ENCODE measurements at regions of chr14 and their contacts with region 1.

Region 1: GRCh38 chr14:24299255-24300195 is at the starts of genes DHRS1 and NOP9:
- DNase-seq: peak; percentile 93
- ATAC-seq: peak; percentile 78
- H3K4me3 Mint-ChIP-seq: peak within 1 kb of the TSS; percentile 95
- H3K27ac Mint-ChIP-seq: peak within 1 kb of the TSS; percentile 94
- H3K4me1 Mint-ChIP-seq: peaks cover 51% of the 10 kb centered on the region
- H3K27me3 Mint-ChIP-seq: no peaks in the 10 kb centered on the region
- CTCF ChIP-seq: no peak
- total RNA-seq, gene DHRS1: 32.5 and 33.9 TPM in 2 replicates
- total RNA-seq, gene NOP9: 30.5 and 36.4 TPM in 2 replicates

Region 2: DNA sequence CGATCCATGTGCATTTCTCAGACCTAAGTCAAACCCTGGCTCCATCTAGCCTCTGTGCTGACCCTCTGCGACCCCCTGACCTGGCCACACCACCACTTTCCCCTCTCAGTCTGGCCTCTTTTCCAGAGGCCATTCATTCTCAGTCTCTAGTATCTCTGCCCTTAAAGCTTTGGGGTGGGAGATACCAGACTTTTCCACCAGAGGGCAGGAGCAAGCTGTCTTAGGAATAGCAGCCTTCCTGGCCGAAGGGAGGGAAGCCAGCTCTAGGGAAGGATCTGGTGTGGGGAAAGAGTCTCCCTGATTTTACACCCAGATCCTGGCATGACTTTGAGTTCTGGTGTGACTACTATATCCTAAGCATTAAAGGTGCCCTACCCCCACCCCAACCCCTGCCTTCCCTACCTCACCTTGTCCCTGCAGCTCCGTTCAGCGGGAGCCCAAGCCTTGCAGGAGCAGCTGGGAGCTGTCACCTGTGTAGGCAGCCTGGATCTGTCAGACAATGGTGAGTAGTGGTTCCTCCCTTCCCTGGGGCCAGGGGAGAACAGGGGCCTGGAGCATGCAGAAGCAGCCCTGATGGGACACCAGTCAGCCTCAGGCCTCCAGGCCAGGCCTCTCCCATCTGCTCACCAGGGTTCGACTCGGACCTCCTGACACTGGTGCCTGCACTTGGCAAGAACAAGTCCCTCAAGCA is 241.1 kb before region 1 on chr14:
- CTCF ChIA-PET with region 1: interaction called, 3 read pairs
- POLR2A ChIA-PET with region 1: no interaction called
- intact Hi-C with region 1: loop called (anchors 1 kb)
- DNase-seq: no peak
- ATAC-seq: peak; percentile 84
- H3K4me3 Mint-ChIP-seq: no peak overlapping the region
- H3K27ac Mint-ChIP-seq: no peak overlapping the region
- H3K4me1 Mint-ChIP-seq: peaks cover 2% of the 10 kb centered on the region
- H3K27me3 Mint-ChIP-seq: no peaks in the 10 kb centered on the region
- CTCF ChIP-seq: no peak

Region 3: GRCh38 chr14:24188251-24189058 is 111.1 kb before region 1 on chr14 and contains the start of gene IPO4:
- CTCF ChIA-PET with region 1: interaction called, 9 read pairs
- POLR2A ChIA-PET with region 1: interaction called, 4 read pairs
- intact Hi-C with region 1: loop called (anchors 1 kb)
- DNase-seq: peak; percentile 81
- ATAC-seq: peak; percentile 92
- H3K4me3 Mint-ChIP-seq: peak within 1 kb of the TSS; percentile 91
- H3K27ac Mint-ChIP-seq: peak within 1 kb of the TSS; percentile 87
- H3K4me1 Mint-ChIP-seq: peaks cover 32% of the 10 kb centered on the region
- H3K27me3 Mint-ChIP-seq: no peaks in the 10 kb centered on the region
- CTCF ChIP-seq: no peak
- total RNA-seq, gene IPO4: 76.4 and 80.3 TPM in 2 replicates

Region 4: GRCh38 chr14:24232121-24232644 is 67.3 kb before region 1 on chr14 and contains the start of gene NEDD8:
- CTCF ChIA-PET with region 1: interaction called, 5 read pairs
- POLR2A ChIA-PET with region 1: interaction called, 242 read pairs
- intact Hi-C with region 1: loop called (anchors 1 kb)
- DNase-seq: no peak
- ATAC-seq: peak; percentile 88
- H3K4me3 Mint-ChIP-seq: peak within 1 kb of the TSS; percentile 99
- H3K27ac Mint-ChIP-seq: peak within 1 kb of the TSS; percentile 94
- H3K4me1 Mint-ChIP-seq: peaks cover 43% of the 10 kb centered on the region
- H3K27me3 Mint-ChIP-seq: no peaks in the 10 kb centered on the region
- CTCF ChIP-seq: no peak
- total RNA-seq, gene NEDD8: 129 and 149 TPM in 2 replicates

Region 5: GRCh38 chr14:24310646-24311604 is 11.4 kb after region 1 on chr14 and contains the start of gene LTB4R:
- CTCF ChIA-PET with region 1: interaction called, 67 read pairs
- POLR2A ChIA-PET with region 1: interaction called, 14 read pairs
- intact Hi-C with region 1: loop called (anchors 1 kb)
- DNase-seq: peak; percentile 73
- ATAC-seq: peak; percentile 78
- H3K4me3 Mint-ChIP-seq: peak within 1 kb of the TSS; percentile 75
- H3K27ac Mint-ChIP-seq: peak within 1 kb of the TSS; percentile 80
- H3K4me1 Mint-ChIP-seq: peaks cover 59% of the 10 kb centered on the region
- H3K27me3 Mint-ChIP-seq: no peaks in the 10 kb centered on the region
- CTCF ChIP-seq: no peak
- total RNA-seq, gene LTB4R: 8.2 and 8.6 TPM in 2 replicates